H1 (cell line): ENCODE measurements at regions of chr3 and their contacts with region 1.

Region 1: GRCh38 chr3:63993653-63994079 is 29.6 kb downstream of the PSMD6 start:
- DNase-seq: peak; percentile 47 to 61
- H3K4me3 ChIP-seq: no peak overlapping the region
- H3K27ac ChIP-seq: no peak overlapping the region
- H3K4me1 ChIP-seq: no peaks in the 10 kb centered on the region
- H3K27me3 ChIP-seq: no peaks in the 10 kb centered on the region
- CTCF ChIP-seq: peak; percentile 80 to 95 (median 90)
- EP300 ChIP-seq: no peak
- POLR2A ChIP-seq: no peak
- RAD21 ChIP-seq: peak; percentile 91 to 94

Region 2: DNA sequence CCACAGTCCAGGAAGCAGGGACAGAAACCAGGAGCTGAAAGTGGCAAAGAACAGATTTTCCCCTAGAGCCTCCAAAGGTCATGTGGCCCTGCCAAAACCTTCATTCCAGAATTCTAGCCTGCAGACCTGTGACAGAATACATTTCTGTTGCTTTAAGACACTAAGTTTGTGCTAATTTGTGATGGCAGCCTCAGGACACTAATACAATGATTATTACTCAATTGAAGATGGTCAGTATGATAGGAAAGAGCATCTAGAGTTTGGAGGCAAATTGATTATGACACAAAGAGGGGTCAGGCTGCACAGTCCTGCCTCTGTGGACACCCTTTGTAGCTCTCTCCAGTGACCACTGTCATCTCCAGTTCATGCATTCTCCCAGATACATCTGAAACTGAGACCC is 253.6 kb before region 1 on chr3:
- CTCF ChIA-PET with region 1: no interaction called
- POLR2A ChIA-PET with region 1: no interaction called
- DNase-seq: no peak
- H3K4me3 ChIP-seq: no peak overlapping the region
- H3K27ac ChIP-seq: no peak overlapping the region
- H3K4me1 ChIP-seq: no peaks in the 10 kb centered on the region
- H3K27me3 ChIP-seq: no peaks in the 10 kb centered on the region
- CTCF ChIP-seq: no peak
- EP300 ChIP-seq: no peak
- POLR2A ChIP-seq: no peak
- RAD21 ChIP-seq: no peak

Region 3: DNA sequence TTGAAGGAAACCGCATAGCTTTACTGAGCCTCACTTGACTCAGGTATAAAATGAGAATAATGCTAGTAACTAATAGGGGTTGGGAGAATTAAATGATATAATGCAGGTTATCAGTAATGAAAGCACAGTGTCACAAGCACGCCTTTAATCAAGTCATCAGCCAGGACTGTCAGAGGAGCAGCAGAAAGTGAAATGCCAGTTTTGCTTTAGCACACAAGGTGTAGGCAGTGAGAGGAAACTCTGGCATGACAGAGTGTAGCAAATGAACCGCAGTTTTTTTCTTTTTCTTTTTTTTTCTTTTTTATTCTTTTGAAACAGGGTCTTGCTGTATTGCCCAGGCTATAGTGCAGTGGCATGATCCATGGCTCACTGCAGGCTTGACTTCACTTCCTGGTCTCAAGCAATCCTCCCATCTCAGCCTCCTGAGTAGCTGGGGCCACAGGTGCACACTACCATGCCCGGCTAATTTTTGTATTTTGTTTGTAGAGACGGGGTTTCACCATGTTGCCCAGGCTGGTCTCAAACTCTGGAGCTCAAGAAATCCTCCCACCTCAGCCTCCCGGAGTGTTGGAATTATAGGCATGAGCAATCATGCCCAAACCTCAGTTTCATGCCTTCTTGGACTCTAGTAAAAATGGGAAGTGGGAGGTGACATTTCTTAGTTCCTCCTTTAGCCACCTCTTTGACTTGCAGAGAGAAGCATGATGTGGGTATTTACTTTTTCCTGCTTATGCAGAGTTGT is 71.8 kb before region 1 on chr3:
- CTCF ChIA-PET with region 1: no interaction called
- POLR2A ChIA-PET with region 1: no interaction called
- DNase-seq: no peak
- H3K4me3 ChIP-seq: no peak overlapping the region
- H3K27ac ChIP-seq: no peak overlapping the region
- H3K4me1 ChIP-seq: no peaks in the 10 kb centered on the region
- H3K27me3 ChIP-seq: no peaks in the 10 kb centered on the region
- CTCF ChIP-seq: no peak
- EP300 ChIP-seq: no peak
- POLR2A ChIP-seq: no peak
- RAD21 ChIP-seq: no peak

Region 4: DNA sequence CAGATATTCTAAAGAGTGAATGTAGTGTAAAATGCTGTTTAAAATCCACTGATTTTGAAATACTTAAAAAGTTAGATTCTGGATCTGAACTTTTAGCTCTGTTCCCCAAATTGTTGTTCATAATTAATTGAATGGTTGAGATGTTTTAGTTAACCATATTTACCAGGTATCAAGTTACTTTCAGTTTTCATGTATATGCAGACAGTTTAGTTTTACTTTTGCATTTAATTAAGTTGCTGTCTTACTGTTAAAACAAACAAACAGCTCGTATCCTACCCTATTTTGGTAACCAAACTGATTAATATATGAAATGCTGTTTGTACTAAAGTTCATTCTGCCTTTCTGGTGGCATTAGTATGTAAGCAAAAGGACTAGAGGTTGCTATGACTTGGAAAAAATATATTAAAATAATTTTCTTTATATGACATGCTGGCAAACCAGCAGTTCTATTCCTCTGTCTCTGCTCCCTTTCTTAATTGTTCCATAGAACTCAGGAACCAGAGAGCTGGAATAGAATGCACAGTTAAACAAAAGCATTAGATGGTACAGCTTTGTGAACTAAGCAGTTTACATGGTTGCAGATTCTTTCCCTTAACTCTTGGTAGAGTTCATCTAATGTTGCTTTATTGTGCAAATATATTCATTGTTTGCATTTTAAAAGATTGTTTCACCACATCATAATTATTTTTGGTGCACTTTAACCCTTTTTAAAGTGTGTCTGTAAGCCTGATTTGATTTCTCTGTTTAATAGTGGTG is 42.0 kb before region 1 on chr3:
- CTCF ChIA-PET with region 1: interaction called, 11 read pairs
- POLR2A ChIA-PET with region 1: no interaction called
- DNase-seq: no peak
- H3K4me3 ChIP-seq: no peak overlapping the region
- H3K27ac ChIP-seq: no peak overlapping the region
- H3K4me1 ChIP-seq: peaks cover 0 to 14% (median 9%) of the 10 kb centered on the region in 4 experiments; a peak in 4 of 7 replicates
- H3K27me3 ChIP-seq: no peaks in the 10 kb centered on the region
- CTCF ChIP-seq: no peak
- EP300 ChIP-seq: no peak
- POLR2A ChIP-seq: no peak
- RAD21 ChIP-seq: no peak

Region 5: GRCh38 chr3:63975723-63976122 is 17.9 kb before region 1 on chr3:
- CTCF ChIA-PET with region 1: interaction called, 16 read pairs
- POLR2A ChIA-PET with region 1: interaction called, 6 read pairs
- DNase-seq: no peak
- H3K4me3 ChIP-seq: no peak overlapping the region
- H3K27ac ChIP-seq: no peak overlapping the region
- H3K4me1 ChIP-seq: peaks cover 4 to 14% (median 7%) of the 10 kb centered on the region in 4 experiments
- H3K27me3 ChIP-seq: no peaks in the 10 kb centered on the region
- CTCF ChIP-seq: no peak
- EP300 ChIP-seq: no peak
- POLR2A ChIP-seq: no peak
- RAD21 ChIP-seq: no peak

Region 6: DNA sequence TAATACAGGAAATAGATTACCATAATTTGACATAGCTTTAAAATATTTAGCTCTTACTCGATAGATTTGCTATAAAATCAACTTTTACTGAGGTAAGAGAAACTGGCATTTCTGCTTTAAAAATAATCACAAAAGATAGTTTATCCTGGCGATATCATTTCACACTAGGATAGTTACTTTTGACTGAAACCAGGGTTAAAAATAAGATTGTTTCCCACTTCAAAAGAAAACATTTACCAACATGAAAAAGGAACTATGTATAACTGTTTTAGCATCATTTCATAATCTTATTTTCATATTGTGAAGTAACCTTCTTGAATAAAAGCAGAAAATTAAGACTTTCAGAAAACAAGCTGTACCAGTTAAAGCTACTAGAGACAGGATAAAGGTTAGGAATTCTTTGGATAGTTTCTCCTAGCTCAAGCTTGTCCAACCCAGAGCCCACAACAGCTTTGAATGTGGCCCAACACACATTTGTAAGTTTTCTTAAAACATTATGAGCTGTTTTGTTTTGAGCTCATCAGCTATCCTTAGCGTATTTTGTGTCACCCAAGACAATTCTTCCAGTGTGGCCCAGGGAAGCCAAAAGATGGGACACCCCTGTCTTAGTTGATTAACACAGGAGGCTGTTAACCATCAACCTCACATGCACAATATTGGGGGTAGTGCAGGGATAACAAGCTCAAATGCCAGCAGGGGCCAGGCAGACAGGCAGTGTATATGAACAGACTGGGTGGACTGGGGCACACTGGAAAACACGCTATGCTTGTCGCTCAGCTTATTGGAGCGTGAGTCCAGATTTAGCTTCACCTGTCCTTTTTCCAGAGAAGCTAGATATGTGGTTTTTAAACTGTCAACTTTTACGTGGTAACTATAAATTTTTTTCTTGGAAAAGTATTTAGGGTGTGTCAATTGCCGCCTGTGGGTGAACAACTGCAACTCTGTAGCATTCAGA is 14.6 kb after region 1 on chr3:
- CTCF ChIA-PET with region 1: interaction called, 25 read pairs
- POLR2A ChIA-PET with region 1: interaction called, 3 read pairs
- DNase-seq: no peak
- H3K4me3 ChIP-seq: no peak overlapping the region
- H3K27ac ChIP-seq: no peak overlapping the region
- H3K4me1 ChIP-seq: no peaks in the 10 kb centered on the region
- H3K27me3 ChIP-seq: no peaks in the 10 kb centered on the region
- CTCF ChIP-seq: no peak
- EP300 ChIP-seq: no peak
- POLR2A ChIP-seq: no peak
- RAD21 ChIP-seq: no peak

Region 7: GRCh38 chr3:64030741-64031140 is 37.1 kb after region 1 on chr3:
- CTCF ChIA-PET with region 1: no interaction called
- POLR2A ChIA-PET with region 1: no interaction called
- DNase-seq: peak; percentile 86 to 89
- H3K4me3 ChIP-seq: no peak overlapping the region
- H3K27ac ChIP-seq: no peak overlapping the region
- H3K4me1 ChIP-seq: peaks cover 0 to 7% (median 3%) of the 10 kb centered on the region in 4 experiments; a peak in 5 of 7 replicates
- H3K27me3 ChIP-seq: no peaks in the 10 kb centered on the region
- CTCF ChIP-seq: peak; percentile 82 to 94 (median 89)
- EP300 ChIP-seq: no peak
- POLR2A ChIP-seq: no peak
- RAD21 ChIP-seq: peak; percentile 98 to 99

Region 8: GRCh38 chr3:64187065-64187959 is 193.6 kb after region 1 on chr3:
- CTCF ChIA-PET with region 1: no interaction called
- POLR2A ChIA-PET with region 1: no interaction called
- DNase-seq: no peak
- H3K4me3 ChIP-seq: no peak overlapping the region
- H3K27ac ChIP-seq: no peak overlapping the region
- H3K4me1 ChIP-seq: peaks cover 0 to 9% (median 1%) of the 10 kb centered on the region in 4 experiments; a peak in 2 of 7 replicates
- H3K27me3 ChIP-seq: no peaks in the 10 kb centered on the region; a peak in 1 of 7 replicates
- CTCF ChIP-seq: no peak
- EP300 ChIP-seq: no peak
- POLR2A ChIP-seq: no peak
- RAD21 ChIP-seq: no peak